CD4-positive, alpha-beta T cell (primary cell): ENCODE measurements at regions of chr17 and their contacts with region 1.

Region 1: GRCh38 chr17:7021993-7022778 is 664 bp upstream of the BCL6B start:
- DNase-seq: peak; percentile 55 to 90 (median 73)
- ATAC-seq: peak; percentile 62
- H3K4me3 ChIP-seq: peak overlapping the region; percentile 44
- H3K4me3 Mint-ChIP-seq: peak overlapping the region; percentile 84
- H3K27ac ChIP-seq: no peak overlapping the region
- H3K27ac Mint-ChIP-seq: peak overlapping the region; percentile 88
- H3K4me1 ChIP-seq: peaks cover 50% of the 10 kb centered on the region
- H3K4me1 Mint-ChIP-seq: peaks cover 48% of the 10 kb centered on the region
- H3K27me3 ChIP-seq: no peaks in the 10 kb centered on the region
- H3K27me3 Mint-ChIP-seq: peaks cover 11% of the 10 kb centered on the region
- CTCF ChIP-seq: peak; percentile 96

Region 2: DNA sequence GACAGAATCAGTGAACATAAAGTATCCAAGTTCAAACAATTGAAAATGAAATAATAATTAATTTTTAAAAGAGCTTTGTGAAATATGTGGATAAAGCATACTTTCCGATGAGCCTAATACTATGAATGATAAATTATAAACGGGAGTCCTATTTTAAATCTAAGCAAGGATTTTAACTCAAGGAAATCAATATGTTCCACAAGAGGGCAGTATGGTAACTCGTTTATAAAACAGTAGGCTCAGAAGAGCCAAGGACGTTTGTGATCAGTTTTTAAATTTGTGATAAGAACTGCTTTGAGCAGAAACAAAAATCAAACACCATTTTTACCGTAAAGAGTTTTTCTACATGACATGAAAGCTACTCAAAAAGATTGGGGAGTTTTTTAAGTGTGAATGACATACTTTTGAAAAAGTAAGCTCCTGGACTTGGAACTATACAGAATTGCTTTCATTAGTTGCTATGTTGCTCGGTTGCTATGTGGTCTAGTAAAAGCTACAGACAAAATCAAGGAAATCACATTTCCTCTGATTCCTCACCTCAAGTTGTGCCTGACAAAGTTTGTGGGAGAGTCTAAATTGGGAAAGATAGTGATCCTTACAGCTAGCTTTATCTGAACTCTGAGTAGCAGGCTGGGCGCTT is 178.8 kb before region 1 on chr17:
- CTCF ChIA-PET with region 1: interaction called, 8 read pairs
- POLR2A ChIA-PET with region 1: no interaction called
- intact Hi-C with region 1: loop called (anchors 5 kb)
- DNase-seq: peak in 3 of 14 experiments; percentile 45 to 68 (median 68)
- ATAC-seq: no peak
- H3K4me3 ChIP-seq: no peak overlapping the region
- H3K4me3 Mint-ChIP-seq: no peak overlapping the region
- H3K27ac ChIP-seq: no peak overlapping the region
- H3K27ac Mint-ChIP-seq: no peak overlapping the region
- H3K4me1 ChIP-seq: no peaks in the 10 kb centered on the region
- H3K4me1 Mint-ChIP-seq: no peaks in the 10 kb centered on the region
- H3K27me3 ChIP-seq: peaks cover 13 to 24% of the 10 kb centered on the region in 2 experiments
- H3K27me3 Mint-ChIP-seq: peaks cover 55% of the 10 kb centered on the region
- CTCF ChIP-seq: peak; percentile 74

Region 3: DNA sequence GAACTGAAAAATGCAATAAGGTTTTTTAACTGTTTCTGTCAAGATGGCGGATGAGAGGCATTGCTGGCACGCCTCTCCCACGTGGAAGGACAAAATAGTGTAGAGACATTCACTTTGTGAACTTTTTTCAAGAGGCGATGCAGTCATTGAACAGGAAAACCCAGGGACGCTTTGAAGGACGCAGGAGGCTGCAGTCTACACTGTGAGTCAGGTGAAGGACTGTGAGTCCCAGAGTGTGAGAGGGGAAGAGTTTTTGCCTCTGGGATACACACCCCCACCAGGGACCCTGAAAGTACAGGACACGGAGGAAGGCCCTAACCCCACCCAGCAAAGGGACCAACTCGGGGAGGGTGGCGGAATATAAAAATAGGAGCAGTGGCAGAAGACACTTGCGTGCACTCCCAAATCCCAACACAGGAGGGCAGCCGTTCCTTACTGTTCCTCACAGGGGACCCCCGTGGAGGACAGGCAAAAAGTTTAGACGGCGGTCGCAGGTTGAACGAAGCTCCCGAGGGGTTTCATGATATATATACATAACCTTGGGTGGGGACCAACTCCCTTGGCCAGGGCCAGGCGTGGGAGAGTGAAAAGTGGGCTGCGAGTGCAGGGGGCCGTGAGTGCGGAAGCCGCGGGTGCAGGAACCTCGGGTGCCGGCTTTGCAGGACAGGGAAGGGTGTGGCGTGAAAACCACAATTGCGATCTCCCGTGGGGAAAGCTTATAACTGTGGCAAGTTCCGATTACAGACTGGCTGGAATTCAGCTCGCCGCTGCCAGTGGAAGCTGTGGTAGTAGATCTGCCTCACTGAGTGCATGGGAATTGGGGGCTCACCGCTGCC is 108.4 kb before region 1 on chr17:
- CTCF ChIA-PET with region 1: interaction called, 19 read pairs
- POLR2A ChIA-PET with region 1: interaction called, 7 read pairs
- intact Hi-C with region 1: loop called (anchors 1 kb)
- DNase-seq: peak; percentile 54 to 83 (median 72)
- ATAC-seq: peak; percentile 86
- H3K4me3 ChIP-seq: peak overlapping the region; percentile 39
- H3K4me3 Mint-ChIP-seq: peak overlapping the region; percentile 81
- H3K27ac ChIP-seq: no peak overlapping the region
- H3K27ac Mint-ChIP-seq: no peak overlapping the region
- H3K4me1 ChIP-seq: peaks cover 11% of the 10 kb centered on the region
- H3K4me1 Mint-ChIP-seq: peaks cover 34% of the 10 kb centered on the region
- H3K27me3 ChIP-seq: peaks cover 0 to 6% of the 10 kb centered on the region in 2 experiments
- H3K27me3 Mint-ChIP-seq: peaks cover 13% of the 10 kb centered on the region
- CTCF ChIP-seq: peak; percentile 87

Region 4: DNA sequence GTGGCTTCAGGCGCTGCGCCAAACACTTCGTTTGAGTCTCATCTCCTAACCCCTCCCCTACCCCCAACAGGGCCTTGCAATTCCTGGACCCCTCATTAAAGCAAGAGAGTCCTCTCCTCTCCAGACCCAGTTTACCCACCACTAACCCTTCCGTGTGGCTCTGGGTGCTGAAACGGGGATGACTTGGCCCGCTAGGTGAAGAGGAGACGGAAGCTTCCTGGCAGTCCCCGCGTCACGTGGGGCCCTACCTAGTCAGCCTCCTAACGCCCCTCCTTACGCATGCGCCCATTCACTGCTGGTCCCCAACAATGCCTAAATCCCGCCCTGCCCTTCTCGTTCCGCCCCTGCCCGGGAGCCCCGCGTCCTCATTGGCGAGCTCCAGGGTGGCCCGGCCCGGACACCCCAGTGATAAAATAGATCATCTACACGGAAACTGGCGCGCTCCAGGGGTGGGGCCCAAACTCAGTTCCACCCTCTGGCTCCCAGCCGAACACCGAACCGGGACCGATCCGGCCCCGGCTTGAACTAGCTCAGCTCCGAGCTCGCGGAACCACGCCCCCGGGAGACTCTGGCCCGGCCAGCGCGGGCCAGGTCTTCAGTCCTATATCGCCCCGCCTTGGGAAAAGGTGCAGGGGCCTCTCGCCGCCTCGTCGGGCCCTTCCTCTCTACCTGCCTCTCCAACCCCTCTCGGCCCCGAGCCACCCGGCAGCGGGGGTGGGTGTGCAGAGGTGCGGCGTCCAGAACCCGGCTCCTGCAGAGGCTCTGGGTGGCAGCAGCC is 13.6 kb after region 1 on chr17 and contains the start of gene SLC16A13:
- CTCF ChIA-PET with region 1: interaction called, 18 read pairs
- POLR2A ChIA-PET with region 1: interaction called, 62 read pairs
- intact Hi-C with region 1: loop called in 1 of 2 experiments (anchors 1 kb)
- DNase-seq: peak; percentile 94 to 100 (median 98)
- ATAC-seq: peak; percentile 90
- H3K4me3 ChIP-seq: peak within 1 kb of the TSS; percentile 99
- H3K4me3 Mint-ChIP-seq: peak within 1 kb of the TSS; percentile 91
- H3K27ac ChIP-seq: peak within 1 kb of the TSS; percentile 84 to 93
- H3K27ac Mint-ChIP-seq: peak within 1 kb of the TSS; percentile 99
- H3K4me1 ChIP-seq: peaks cover 57% of the 10 kb centered on the region
- H3K4me1 Mint-ChIP-seq: peaks cover 63% of the 10 kb centered on the region
- H3K27me3 ChIP-seq: no peaks in the 10 kb centered on the region
- H3K27me3 Mint-ChIP-seq: no peaks in the 10 kb centered on the region
- CTCF ChIP-seq: no peak
- total RNA-seq, gene SLC16A13: 2.3 to 2.4 TPM